GM18951 (cell line): ENCODE measurements at regions of chr9 and their contacts with region 1.

Region 1: DNA sequence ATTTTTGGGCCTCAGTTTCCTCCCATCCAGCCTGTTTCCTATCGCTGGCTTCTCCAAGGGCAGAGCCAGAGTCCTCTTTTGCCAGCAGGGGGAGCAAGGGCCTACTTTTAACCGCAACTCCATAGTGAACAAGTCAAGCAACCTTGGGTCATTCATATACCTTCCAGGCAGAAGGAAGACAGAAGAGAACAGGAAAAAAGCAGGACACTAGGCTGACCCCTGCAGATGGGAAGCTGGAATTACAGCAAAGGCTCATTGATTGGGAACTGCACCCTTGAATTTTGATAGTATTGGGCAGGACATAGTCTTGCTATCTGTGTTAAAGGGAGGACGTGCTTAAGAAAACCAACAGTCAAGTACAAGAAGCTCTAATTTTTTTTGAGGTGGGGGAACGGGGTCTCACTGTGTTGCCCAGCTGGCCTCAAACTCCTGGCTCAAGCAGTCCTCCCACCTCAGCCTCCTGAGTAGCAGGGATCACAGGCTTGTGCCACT is 30.1 kb downstream of the QRFP start:
- POLR2A ChIP-seq: no peak

Region 2: GRCh38 chr9:130701056-130702022 is 165.2 kb before region 1 on chr9:
- in situ Hi-C with region 1: loop called (anchors 10 kb)
- POLR2A ChIP-seq: no peak

Region 3: GRCh38 chr9:130946778-130947617 is 80.5 kb after region 1 on chr9:
- in situ Hi-C with region 1: loop called (anchors 5 kb)
- POLR2A ChIP-seq: no peak

Region 4: DNA sequence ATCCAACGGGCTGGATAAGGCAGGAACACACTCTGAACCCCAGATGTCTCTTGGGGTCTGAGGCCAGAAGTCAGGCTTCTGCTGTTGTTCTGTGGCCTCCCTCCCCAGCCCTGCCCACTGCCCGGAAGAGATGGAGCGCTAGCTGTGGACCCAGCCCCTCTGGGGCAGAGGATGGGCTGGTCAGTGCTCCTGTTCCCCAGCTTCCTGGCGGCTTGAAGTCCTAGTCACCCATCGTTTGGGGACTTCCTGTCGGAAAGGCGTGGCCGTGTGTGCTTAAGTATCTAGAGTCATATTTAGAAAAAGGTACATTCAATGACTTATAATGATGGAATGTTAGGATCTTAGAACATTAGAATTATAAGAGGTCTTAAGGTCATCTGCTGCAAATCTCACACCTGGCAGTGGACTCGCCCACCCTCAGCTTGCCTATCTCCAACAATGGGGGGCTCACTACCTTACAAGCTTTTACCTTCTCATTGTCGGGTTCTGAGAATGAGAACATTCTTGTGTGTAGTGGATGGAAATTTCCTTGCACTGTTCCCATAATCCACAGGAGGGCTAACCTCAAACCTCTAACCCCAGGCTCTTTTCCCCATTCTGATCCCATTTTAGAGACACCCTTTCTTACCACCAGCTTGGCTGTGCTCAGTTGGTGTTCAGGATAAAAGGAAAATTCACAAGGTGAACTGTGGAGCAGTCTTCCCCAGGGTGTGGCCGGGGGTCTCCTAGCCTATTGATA is 216.4 kb after region 1 on chr9:
- in situ Hi-C with region 1: no loop called
- POLR2A ChIP-seq: no peak

Region 5: GRCh38 chr9:131096269-131097125 is 230.0 kb after region 1 on chr9 and contains the start of gene AIF1L:
- in situ Hi-C with region 1: no loop called
- POLR2A ChIP-seq: no peak